ENCODE measurements at regions of chrX and their contacts with region 1.

Region 1: DNA sequence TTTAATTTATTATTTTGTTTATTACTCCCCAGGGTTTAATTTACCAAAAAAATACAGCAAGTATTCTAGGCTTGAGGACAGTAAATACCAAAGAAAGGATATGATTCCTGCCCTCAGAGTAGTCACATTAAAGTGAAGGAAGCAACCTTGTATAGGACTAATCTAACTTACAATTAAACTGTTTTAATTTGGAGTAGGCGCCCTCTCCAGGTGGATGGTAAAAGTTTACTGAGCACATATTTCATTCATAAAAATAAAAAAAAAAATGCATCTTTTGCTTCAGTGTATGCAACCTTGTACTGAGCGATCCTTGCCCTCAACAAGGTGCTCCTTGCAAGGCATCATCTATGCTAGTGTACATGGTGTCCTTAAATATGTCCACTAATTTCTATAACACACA is 72.0 kb upstream of the MAGEB16 start:
- DNase-seq: peak; percentile 30
- H3K4me3 Mint-ChIP-seq: no peak overlapping the region
- H3K27ac Mint-ChIP-seq: no peak overlapping the region
- H3K4me1 Mint-ChIP-seq: peaks cover 23% of the 10 kb centered on the region
- H3K27me3 Mint-ChIP-seq: no peaks in the 10 kb centered on the region
- CTCF ChIP-seq: peak; percentile 18

Region 2: DNA sequence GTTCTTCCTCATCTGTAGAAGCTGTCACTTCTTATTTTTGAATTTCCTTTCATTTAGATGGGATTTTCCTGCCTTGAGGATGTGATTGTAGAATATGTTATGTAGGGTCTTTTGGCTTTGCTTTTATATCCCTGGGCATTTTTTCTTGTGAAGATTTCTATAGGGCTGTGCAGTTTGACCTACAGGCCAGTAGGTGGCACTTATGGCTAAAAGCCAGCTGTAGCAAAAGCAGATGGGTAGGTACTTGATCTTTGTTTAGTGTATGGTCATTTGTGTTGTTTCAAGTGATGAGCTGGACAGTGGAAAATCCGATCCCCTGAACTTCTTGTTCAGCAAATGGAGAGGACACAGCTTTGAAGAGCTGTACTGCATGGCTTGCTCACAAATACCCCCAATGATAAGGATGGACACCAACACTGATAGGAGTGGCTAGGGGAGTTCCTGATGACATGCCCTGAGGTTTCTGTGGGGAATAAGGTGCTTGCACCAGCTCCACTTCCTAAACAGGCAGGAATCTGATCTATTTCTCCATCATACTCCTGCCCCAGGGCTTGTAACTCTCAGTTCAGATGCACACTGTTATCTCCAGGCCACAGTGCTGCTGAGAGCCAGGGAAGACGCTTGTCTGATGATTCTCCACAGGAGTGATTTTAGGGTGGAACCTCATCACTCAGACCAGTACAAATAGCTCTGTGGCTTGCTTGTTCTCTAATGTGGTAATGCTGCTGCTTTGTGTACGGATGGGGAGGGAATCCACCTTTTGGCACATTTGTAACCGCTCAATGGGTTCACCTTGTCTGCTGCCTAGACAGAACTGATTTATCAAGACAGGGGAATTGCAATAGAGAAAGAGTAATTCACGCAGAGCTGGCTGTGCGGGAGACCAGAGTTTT is 345.1 kb before region 1 on chrX:
- CTCF ChIA-PET with region 1: no interaction called
- intact Hi-C with region 1: loop called (anchors 2 kb)
- DNase-seq: no peak
- H3K4me3 Mint-ChIP-seq: no peak overlapping the region
- H3K27ac Mint-ChIP-seq: peak overlapping the region; percentile 22
- H3K4me1 Mint-ChIP-seq: peaks cover 23% of the 10 kb centered on the region
- H3K27me3 Mint-ChIP-seq: no peaks in the 10 kb centered on the region
- CTCF ChIP-seq: peak; percentile 52

Region 3: GRCh38 chrX:35562395-35562794 is 163.8 kb before region 1 on chrX:
- CTCF ChIA-PET with region 1: no interaction called
- intact Hi-C with region 1: no loop called
- DNase-seq: no peak
- H3K4me3 Mint-ChIP-seq: no peak overlapping the region
- H3K27ac Mint-ChIP-seq: no peak overlapping the region
- H3K4me1 Mint-ChIP-seq: peaks cover 20% of the 10 kb centered on the region
- H3K27me3 Mint-ChIP-seq: no peaks in the 10 kb centered on the region
- CTCF ChIP-seq: no peak

Region 4: GRCh38 chrX:35743331-35743730 is 17.2 kb after region 1 on chrX:
- CTCF ChIA-PET with region 1: no interaction called
- intact Hi-C with region 1: no loop called
- DNase-seq: no peak
- H3K4me3 Mint-ChIP-seq: no peak overlapping the region
- H3K27ac Mint-ChIP-seq: no peak overlapping the region
- H3K4me1 Mint-ChIP-seq: no peaks in the 10 kb centered on the region
- H3K27me3 Mint-ChIP-seq: no peaks in the 10 kb centered on the region
- CTCF ChIP-seq: no peak